Colonic mucosa (tissue), 4 donors: ENCODE measurements at regions of chr17 and their contacts with region 1.

Region 1: DNA sequence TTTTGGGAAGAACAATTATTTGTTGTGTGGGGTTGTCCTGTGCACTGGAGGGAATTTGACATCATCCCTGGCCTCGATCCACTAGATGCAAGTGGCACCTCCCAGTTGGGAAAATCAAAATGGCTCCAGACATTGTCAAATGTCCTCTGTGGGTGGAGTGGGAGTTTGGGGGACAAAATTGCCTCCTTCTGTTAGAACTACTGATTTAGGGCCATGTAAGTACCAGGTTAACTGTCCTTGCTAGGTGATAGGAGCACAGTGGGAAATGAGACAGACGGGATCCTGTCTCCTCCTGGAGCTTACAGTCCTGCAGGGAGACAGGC is 56.8 kb downstream of the ARHGAP23 start:
- DNase-seq: no peak
- H3K4me3 ChIP-seq: no peak overlapping the region
- H3K27ac ChIP-seq: no peak overlapping the region
- H3K4me1 ChIP-seq: no peaks in the 10 kb centered on the region
- H3K27me3 ChIP-seq: no peaks in the 10 kb centered on the region
- CTCF ChIP-seq: peak; percentile 5

Region 2: DNA sequence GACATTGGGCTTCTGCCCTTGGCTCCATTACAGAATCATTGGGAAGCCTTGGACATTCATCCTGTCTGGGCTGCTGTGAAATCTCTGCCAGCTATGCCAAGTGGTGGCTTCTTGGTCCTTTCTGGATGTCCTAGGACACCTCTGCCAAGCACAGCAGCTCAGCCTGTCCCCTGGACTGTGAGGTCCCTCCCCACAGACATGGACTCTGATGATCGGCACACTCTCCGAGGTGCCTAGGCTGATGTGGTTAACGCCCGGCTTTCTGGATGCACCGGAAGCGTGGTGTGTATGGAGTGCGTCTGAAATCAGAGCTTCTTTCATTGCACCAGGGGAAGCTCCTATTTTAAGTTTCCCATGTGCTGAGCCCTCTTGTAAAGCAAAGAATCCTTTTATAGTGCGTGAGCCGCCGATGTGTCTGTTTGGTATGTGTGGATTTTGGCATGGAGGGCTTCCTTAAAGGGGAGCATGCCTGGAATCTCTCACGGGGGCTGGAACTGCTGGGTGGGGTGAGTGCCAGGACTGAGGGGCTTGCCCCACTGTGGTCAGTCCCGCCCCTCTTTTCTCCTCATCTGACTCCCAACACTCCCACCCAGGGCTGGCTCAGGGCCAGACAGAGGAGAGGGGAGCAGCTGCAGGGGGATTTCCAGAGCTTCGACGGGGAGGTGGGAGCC is 63.8 kb before region 1 on chr17:
- intact Hi-C with region 1: loop called (anchors 5 kb)
- DNase-seq: no peak
- H3K4me3 ChIP-seq: no peak overlapping the region
- H3K27ac ChIP-seq: no peak overlapping the region
- H3K4me1 ChIP-seq: no peaks in the 10 kb centered on the region
- H3K27me3 ChIP-seq: peaks cover 29% of the 10 kb centered on the region
- CTCF ChIP-seq: no peak

Region 3: DNA sequence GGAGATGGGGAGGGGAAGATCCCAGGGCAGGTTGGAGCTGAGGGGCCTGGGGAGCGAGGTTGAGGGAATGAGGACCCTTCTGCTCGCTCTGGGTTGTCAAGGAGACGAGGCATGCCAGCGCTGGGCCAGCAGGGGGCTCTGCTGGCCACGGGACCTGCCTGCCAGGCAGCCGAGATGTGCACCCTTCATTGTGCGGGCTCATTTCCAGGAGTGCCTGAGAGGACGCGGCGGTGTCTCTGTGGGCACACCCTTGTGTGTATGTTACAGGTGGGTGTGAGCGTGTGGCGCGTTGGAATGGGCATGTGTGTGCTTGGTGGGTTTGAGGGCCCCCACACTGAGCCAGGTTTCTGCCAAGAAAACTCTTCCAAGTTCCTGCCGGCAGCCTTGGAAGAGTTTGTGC is 41.0 kb before region 1 on chr17:
- intact Hi-C with region 1: loop called (anchors 5 kb)
- DNase-seq: peak; percentile 47
- H3K4me3 ChIP-seq: no peak overlapping the region
- H3K27ac ChIP-seq: no peak overlapping the region
- H3K4me1 ChIP-seq: no peaks in the 10 kb centered on the region
- H3K27me3 ChIP-seq: no peaks in the 10 kb centered on the region
- CTCF ChIP-seq: peak; percentile 69

Region 4: GRCh38 chr17:38667099-38667786 is 182.1 kb after region 1 on chr17:
- intact Hi-C with region 1: loop called (anchors 5 kb)
- DNase-seq: peak; percentile 65
- H3K4me3 ChIP-seq: no peak overlapping the region
- H3K27ac ChIP-seq: no peak overlapping the region
- H3K4me1 ChIP-seq: no peaks in the 10 kb centered on the region
- H3K27me3 ChIP-seq: peaks cover 25% of the 10 kb centered on the region
- CTCF ChIP-seq: peak; percentile 99